CD4-positive, alpha-beta T cell (primary cell): ENCODE measurements at regions of chr15 and their contacts with region 1.

Region 1: GRCh38 chr15:65304389-65305144 is at the start of gene RNU5B-1:
- DNase-seq: peak; percentile 37 to 92 (median 65)
- ATAC-seq: peak; percentile 74
- H3K4me3 ChIP-seq: peak within 1 kb of the TSS; percentile 61
- H3K4me3 Mint-ChIP-seq: peak within 1 kb of the TSS; percentile 93
- H3K27ac ChIP-seq: peak within 1 kb of the TSS; percentile 72 to 93
- H3K27ac Mint-ChIP-seq: peak within 1 kb of the TSS; percentile 100
- H3K4me1 ChIP-seq: peaks cover 26% of the 10 kb centered on the region
- H3K4me1 Mint-ChIP-seq: peaks cover 29% of the 10 kb centered on the region
- H3K27me3 ChIP-seq: no peaks in the 10 kb centered on the region
- H3K27me3 Mint-ChIP-seq: peaks cover 6% of the 10 kb centered on the region
- CTCF ChIP-seq: peak; percentile 96
- total RNA-seq, gene RNU5B-1: 23.7 to 34.8 TPM

Region 2: GRCh38 chr15:65028921-65029735 is 275.4 kb before region 1 on chr15 and contains the start of gene MTFMT:
- CTCF ChIA-PET with region 1: no interaction called
- POLR2A ChIA-PET with region 1: interaction called, 4 read pairs
- intact Hi-C with region 1: loop called in 1 of 2 experiments (anchors 5 kb)
- DNase-seq: peak; percentile 86 to 98 (median 92)
- ATAC-seq: peak; percentile 94
- H3K4me3 ChIP-seq: peak within 1 kb of the TSS; percentile 72
- H3K4me3 Mint-ChIP-seq: peak within 1 kb of the TSS; percentile 98
- H3K27ac ChIP-seq: peak within 1 kb of the TSS; percentile 29 to 37
- H3K27ac Mint-ChIP-seq: peak within 1 kb of the TSS; percentile 66
- H3K4me1 ChIP-seq: peaks cover 25% of the 10 kb centered on the region
- H3K4me1 Mint-ChIP-seq: peaks cover 25% of the 10 kb centered on the region
- H3K27me3 ChIP-seq: peaks cover 0 to 6% of the 10 kb centered on the region in 2 experiments
- H3K27me3 Mint-ChIP-seq: peaks cover 15% of the 10 kb centered on the region
- CTCF ChIP-seq: no peak
- total RNA-seq, gene MTFMT: 3.4 to 5.8 TPM

Region 3: GRCh38 chr15:65275728-65276126 is 28.8 kb before region 1 on chr15:
- CTCF ChIA-PET with region 1: no interaction called
- POLR2A ChIA-PET with region 1: interaction called, 16 read pairs
- intact Hi-C with region 1: no loop called
- DNase-seq: no peak
- ATAC-seq: no peak
- H3K4me3 ChIP-seq: no peak overlapping the region
- H3K4me3 Mint-ChIP-seq: no peak overlapping the region
- H3K27ac ChIP-seq: peak overlapping the region in 1 of 2 donors; percentile 48
- H3K27ac Mint-ChIP-seq: peak overlapping the region; percentile 77
- H3K4me1 ChIP-seq: peaks cover 22% of the 10 kb centered on the region
- H3K4me1 Mint-ChIP-seq: peaks cover 52% of the 10 kb centered on the region
- H3K27me3 ChIP-seq: no peaks in the 10 kb centered on the region
- H3K27me3 Mint-ChIP-seq: no peaks in the 10 kb centered on the region
- CTCF ChIP-seq: no peak

Region 4: GRCh38 chr15:65292938-65293518 is 11.5 kb before region 1 on chr15:
- CTCF ChIA-PET with region 1: interaction called, 6 read pairs
- POLR2A ChIA-PET with region 1: interaction called, 136 read pairs
- intact Hi-C with region 1: loop called (anchors 1 kb)
- DNase-seq: no peak
- ATAC-seq: no peak
- H3K4me3 ChIP-seq: no peak overlapping the region
- H3K4me3 Mint-ChIP-seq: no peak overlapping the region
- H3K27ac ChIP-seq: no peak overlapping the region
- H3K27ac Mint-ChIP-seq: no peak overlapping the region
- H3K4me1 ChIP-seq: peaks cover 22% of the 10 kb centered on the region
- H3K4me1 Mint-ChIP-seq: peaks cover 39% of the 10 kb centered on the region
- H3K27me3 ChIP-seq: no peaks in the 10 kb centered on the region
- H3K27me3 Mint-ChIP-seq: peaks cover 5% of the 10 kb centered on the region
- CTCF ChIP-seq: no peak

Region 5: DNA sequence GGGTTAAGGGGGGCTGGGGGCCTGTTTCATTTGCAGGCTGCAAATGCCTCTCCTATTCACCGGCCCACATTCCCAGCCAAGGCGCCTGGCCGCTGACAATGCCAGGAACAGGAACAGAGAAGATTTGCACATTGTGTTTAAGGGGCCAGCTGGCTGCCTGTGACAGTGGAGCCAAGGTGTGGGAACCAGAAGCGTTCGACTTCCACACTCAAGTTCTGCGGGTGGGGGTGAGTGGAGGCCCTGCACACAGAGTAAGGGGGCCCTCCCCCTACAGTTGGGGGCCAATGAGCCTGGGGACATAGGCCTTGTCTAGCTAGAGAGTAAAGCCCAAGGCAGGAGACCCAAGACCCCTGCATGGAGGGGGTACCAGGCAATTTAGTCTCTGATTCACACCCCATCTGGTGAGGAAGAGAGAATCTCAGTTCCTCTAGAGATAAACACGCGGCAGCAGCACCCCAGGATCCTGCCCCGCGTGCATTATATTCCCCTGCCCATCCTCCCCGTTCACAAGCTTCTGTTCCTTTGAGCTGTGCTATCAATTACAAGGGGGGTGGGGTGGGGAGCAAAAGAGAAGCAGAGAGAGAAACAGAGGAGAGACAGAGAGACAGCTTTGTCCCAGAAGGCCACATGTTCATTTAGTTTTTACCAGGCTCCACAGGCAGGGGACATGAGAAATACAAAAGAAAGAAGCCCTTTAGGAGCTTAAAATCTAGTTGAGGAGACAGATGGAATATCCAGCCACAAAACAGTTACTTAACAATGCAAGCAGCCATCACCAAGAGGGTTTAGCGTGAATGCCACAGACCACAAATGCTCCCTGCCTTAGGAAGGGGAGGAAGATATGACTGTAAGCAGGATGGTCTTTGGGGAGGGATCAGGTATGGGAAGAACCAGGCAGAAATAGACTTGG is 64.0 kb after region 1 on chr15:
- CTCF ChIA-PET with region 1: no interaction called
- POLR2A ChIA-PET with region 1: no interaction called
- intact Hi-C with region 1: no loop called
- DNase-seq: peak in 1 of 14 experiments; percentile 2
- ATAC-seq: no peak
- H3K4me3 ChIP-seq: no peak overlapping the region
- H3K4me3 Mint-ChIP-seq: no peak overlapping the region
- H3K27ac ChIP-seq: no peak overlapping the region
- H3K27ac Mint-ChIP-seq: no peak overlapping the region
- H3K4me1 ChIP-seq: no peaks in the 10 kb centered on the region
- H3K4me1 Mint-ChIP-seq: no peaks in the 10 kb centered on the region
- H3K27me3 ChIP-seq: peaks cover 0 to 17% of the 10 kb centered on the region in 2 experiments
- H3K27me3 Mint-ChIP-seq: peaks cover 27% of the 10 kb centered on the region
- CTCF ChIP-seq: no peak

Region 6: GRCh38 chr15:65610871-65611718 is 306.5 kb after region 1 on chr15 and contains the start of gene INTS14:
- CTCF ChIA-PET with region 1: no interaction called
- POLR2A ChIA-PET with region 1: interaction called, 5 read pairs
- intact Hi-C with region 1: loop called in 1 of 2 experiments (anchors 10 kb)
- DNase-seq: peak; percentile 81 to 96 (median 89)
- ATAC-seq: peak; percentile 94
- H3K4me3 ChIP-seq: peak within 1 kb of the TSS; percentile 77
- H3K4me3 Mint-ChIP-seq: peak within 1 kb of the TSS; percentile 99
- H3K27ac ChIP-seq: peak within 1 kb of the TSS; percentile 88 to 92
- H3K27ac Mint-ChIP-seq: peak within 1 kb of the TSS; percentile 93
- H3K4me1 ChIP-seq: peaks cover 28% of the 10 kb centered on the region
- H3K4me1 Mint-ChIP-seq: peaks cover 41% of the 10 kb centered on the region
- H3K27me3 ChIP-seq: no peaks in the 10 kb centered on the region
- H3K27me3 Mint-ChIP-seq: no peaks in the 10 kb centered on the region
- CTCF ChIP-seq: peak; percentile 59
- total RNA-seq, gene INTS14: 20.6 to 25.1 TPM